Caco-2 (cell line): ENCODE measurements at regions of chr18 and their contacts with region 1.

Region 1: GRCh38 chr18:50111265-50111792 is 83.6 kb downstream of the MYO5B start:
- DNase-seq: peak in 1 of 2 experiments; percentile 25
- H3K4me3 ChIP-seq: no peak overlapping the region
- H3K4me3 Mint-ChIP-seq: no peak overlapping the region
- H3K27ac Mint-ChIP-seq: peak overlapping the region; percentile 39
- H3K4me1 ChIP-seq: peaks cover 44% of the 10 kb centered on the region
- H3K4me1 Mint-ChIP-seq: peaks cover 33% of the 10 kb centered on the region
- H3K27me3 ChIP-seq: no peaks in the 10 kb centered on the region
- H3K27me3 Mint-ChIP-seq: no peaks in the 10 kb centered on the region
- CTCF ChIP-seq: peak; percentile 26 to 30

Region 2: GRCh38 chr18:50061876-50062517 is 49.3 kb before region 1 on chr18:
- CTCF ChIA-PET with region 1: no interaction called
- POLR2A ChIA-PET with region 1: no interaction called
- intact Hi-C with region 1: loop called (anchors 5 kb)
- DNase-seq: no peak
- H3K4me3 ChIP-seq: no peak overlapping the region
- H3K4me3 Mint-ChIP-seq: no peak overlapping the region
- H3K27ac Mint-ChIP-seq: no peak overlapping the region
- H3K4me1 ChIP-seq: no peaks in the 10 kb centered on the region
- H3K4me1 Mint-ChIP-seq: no peaks in the 10 kb centered on the region
- H3K27me3 ChIP-seq: no peaks in the 10 kb centered on the region
- H3K27me3 Mint-ChIP-seq: no peaks in the 10 kb centered on the region
- CTCF ChIP-seq: no peak

Region 3: DNA sequence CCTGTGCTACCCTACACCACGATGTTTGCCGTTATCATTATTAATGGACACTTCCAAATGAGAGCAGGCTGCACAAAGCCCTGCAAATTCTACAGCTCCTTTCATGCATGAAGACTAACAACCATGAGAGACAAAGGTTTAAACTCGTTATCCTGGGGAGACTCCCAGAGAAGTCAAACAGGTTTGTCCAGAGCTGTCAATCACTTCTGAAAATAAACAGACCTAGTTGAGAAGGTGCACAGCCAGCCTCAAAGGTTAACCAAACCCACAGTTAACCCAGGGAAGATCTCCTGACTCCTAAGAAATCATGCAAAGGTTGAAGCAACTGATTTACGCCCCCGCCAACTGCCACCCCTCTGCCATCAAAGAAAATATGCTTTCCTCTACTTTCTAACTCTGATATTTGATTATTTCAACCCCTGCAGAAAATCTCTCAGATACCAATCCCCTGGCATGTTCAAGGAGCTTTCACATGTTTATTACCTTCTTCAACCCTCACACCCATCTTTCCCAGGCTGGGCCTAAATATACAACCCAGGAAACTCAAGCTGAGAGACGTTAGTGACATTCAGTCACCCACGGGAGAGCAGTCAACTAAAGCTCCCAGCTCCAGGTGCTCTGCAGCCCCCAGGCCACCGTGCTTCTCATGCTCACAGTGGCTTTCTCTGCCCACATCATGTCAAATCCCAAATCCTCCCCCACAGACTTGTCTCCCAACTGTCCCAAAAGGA is 47.8 kb after region 1 on chr18:
- CTCF ChIA-PET with region 1: no interaction called
- POLR2A ChIA-PET with region 1: no interaction called
- intact Hi-C with region 1: loop called (anchors 2 kb)
- DNase-seq: peak; percentile 60 to 74
- H3K4me3 ChIP-seq: no peak overlapping the region
- H3K4me3 Mint-ChIP-seq: peak overlapping the region; percentile 55
- H3K27ac Mint-ChIP-seq: peak overlapping the region; percentile 93
- H3K4me1 ChIP-seq: peaks cover 40% of the 10 kb centered on the region
- H3K4me1 Mint-ChIP-seq: peaks cover 38% of the 10 kb centered on the region
- H3K27me3 ChIP-seq: no peaks in the 10 kb centered on the region
- H3K27me3 Mint-ChIP-seq: no peaks in the 10 kb centered on the region
- CTCF ChIP-seq: no peak

Region 4: DNA sequence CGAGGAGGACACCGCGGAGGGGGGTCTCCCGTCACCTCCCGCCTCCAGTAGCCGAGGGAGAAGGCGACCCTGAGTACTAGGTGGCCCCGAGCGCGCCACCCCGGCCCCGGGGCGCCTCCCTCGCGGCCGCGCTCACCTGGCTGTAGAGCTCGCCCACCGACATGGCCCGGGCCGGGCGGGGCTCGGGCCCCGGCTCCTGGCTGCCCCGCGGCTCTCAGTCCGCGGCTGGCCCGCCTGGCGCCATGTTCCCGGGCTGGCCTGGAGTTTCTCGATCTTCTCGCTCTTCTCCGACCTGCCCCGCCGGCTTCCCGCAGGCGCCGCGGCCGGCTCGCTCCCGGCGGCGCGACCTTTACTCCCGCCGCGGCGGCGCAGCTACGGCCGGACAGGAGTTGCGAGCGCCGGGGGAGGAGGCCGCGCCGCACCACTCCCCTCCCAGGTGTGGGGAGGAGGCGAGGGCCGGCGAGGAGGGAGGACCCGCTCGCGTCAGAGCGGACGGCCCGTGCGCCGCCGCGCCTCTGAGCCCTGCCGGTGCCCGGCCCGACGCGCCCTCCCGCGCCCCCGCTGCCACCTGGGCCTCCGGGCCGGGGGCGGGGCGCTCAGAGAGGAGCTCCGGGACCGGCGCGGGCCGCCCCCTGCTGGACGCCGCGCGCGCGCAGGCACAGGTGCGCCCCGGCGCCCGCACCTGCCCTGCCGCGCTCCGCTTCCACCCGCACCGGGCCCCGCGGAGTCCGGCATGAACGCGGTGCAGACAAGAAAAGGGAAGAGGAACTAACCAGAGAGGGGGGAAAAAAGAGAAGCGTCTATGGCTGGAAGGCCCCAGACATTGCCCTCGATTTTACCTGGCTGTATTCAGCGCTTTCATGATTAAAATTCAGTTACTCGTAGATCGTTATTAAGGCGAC is 83.6 kb after region 1 on chr18 and contains the start of gene MYO5B:
- CTCF ChIA-PET with region 1: interaction called, 3 read pairs
- POLR2A ChIA-PET with region 1: no interaction called
- intact Hi-C with region 1: loop called (anchors 1 kb)
- DNase-seq: peak; percentile 75 to 87
- H3K4me3 ChIP-seq: peak within 1 kb of the TSS; percentile 74
- H3K4me3 Mint-ChIP-seq: peak within 1 kb of the TSS; percentile 93
- H3K27ac Mint-ChIP-seq: peak within 1 kb of the TSS; percentile 72
- H3K4me1 ChIP-seq: no peaks in the 10 kb centered on the region
- H3K4me1 Mint-ChIP-seq: no peaks in the 10 kb centered on the region
- H3K27me3 ChIP-seq: no peaks in the 10 kb centered on the region
- H3K27me3 Mint-ChIP-seq: no peaks in the 10 kb centered on the region
- CTCF ChIP-seq: peak in 1 of 2 experiments; percentile 20
- total RNA-seq, gene MYO5B: 28.3 and 28.6 TPM in 2 replicates